Dorsolateral prefrontal cortex (tissue), 120 donors: ENCODE measurements at regions of chr9 and their contacts with region 1.

Region 1: DNA sequence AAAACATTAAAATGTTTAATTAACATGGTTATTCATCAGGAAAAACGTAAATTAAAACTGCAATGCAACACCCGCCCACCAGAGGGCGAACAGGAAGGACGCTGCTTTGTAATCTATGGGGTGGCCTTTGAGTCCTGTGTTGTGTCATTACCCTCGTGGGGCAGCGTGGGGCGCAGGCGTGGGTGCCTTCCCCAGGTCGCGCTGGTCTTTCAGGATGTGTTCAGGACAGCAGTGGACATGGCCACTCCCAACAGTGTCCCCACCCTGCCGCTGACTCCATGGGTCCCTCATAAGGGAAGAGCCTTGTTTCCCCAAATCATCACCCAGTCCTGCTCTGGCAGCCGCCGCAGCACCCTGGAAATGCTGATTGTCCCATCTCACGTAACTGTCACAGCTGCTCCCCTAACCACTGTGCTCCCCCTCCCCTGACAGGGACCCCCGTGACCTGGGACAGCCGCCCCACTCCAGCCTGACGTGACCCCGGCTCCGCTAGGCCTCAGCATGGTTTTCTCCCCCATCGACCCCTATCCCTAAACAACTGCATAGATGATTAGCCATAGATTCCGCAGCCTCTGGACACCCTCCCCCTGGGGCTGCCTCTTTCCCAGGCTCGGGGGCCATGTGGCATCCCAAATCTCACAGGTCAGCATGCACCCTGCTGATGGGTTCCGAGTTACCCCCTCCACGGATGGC is 36.4 kb downstream of the GLT6D1 start:
- DNase-seq: peak in 7 of 10 donors; percentile 18 to 43 (median 40)
- H3K4me3 ChIP-seq: no peak overlapping the region
- H3K27ac ChIP-seq: no peak overlapping the region
- H3K27me3 ChIP-seq: peaks cover 0 to 7% (median 0%) of the 10 kb centered on the region in 45 donors
- CTCF ChIP-seq: peak; percentile 56 to 85 (median 72)

Region 2: DNA sequence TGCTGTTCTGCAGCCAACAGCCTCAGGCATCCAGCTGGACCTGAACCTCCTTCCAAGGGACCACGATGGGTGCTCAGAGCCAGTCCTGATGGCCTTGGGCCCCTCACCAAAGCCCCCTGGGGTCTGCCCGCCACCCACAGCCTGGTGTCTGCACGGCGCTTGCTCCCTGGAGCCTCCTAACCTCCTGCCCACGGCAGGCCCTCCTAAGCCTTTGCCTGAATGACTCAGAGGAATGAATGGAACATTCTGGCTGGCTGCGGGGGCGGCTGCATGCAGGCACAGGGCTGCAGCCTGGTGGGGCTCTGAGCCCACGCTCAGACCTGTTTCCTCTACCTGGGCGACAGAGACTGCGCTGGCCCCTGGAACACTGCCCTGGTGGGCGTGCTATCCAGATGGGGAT is 89.5 kb after region 1 on chr9:
- intact Hi-C with region 1: loop called in 1 of 2 experiments (anchors 10 kb)
- DNase-seq: peak in 9 of 10 donors; percentile 41 to 88 (median 78)
- H3K4me3 ChIP-seq: no peak overlapping the region
- H3K27ac ChIP-seq: peak overlapping the region in 51 of 59 donors; percentile 28 to 95 (median 79)
- H3K27me3 ChIP-seq: peaks cover 0 to 2% (median 0%) of the 10 kb centered on the region in 45 donors
- CTCF ChIP-seq: no peak

Region 3: DNA sequence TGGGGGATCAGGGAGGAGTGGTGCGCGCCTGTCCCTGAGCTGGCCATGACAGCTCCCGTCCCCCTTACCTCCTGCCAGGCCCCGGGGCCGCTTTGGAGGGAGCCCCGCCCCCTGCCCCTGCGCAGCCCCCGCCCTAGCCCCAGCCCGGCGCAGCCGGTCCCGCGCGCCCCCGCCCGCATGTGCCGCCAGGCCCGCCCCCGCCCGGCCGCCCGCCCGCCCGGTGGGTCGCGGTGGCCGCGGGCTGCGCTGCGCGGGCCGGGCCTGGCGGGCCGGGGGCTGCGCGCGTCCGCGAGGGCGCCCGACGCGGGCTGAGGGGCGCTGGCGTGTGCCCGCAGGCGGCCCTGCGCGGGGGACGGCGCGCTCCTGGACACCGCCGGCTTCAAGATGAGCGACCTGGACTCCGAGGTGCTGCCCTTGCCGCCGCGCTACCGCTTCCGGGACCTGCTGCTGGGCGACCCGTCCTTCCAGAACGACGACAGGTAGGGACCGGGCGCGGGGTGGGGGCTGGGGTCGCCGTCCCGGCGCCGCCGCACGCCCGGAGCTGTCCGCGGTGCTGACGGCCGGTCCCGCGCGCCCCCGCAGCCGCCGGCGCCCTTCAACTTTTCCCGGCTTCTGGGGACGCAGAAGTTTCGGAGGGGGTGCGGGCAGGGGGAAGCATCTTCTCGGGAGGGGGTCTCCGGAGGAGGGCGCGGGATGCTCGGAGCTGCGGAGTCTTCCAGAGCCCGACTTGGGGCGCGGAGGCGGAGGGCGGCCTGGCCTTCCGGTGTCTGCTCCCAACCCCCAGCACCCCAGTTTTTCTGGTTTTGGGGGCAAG is 111.5 kb after region 1 on chr9:
- intact Hi-C with region 1: no loop called
- DNase-seq: no peak
- H3K4me3 ChIP-seq: peak overlapping the region in 57 of 59 donors; percentile 9 to 70 (median 51)
- H3K27ac ChIP-seq: peak overlapping the region in 51 of 59 donors; percentile 36 to 91 (median 77)
- H3K27me3 ChIP-seq: peaks cover 0 to 65% (median 29%) of the 10 kb centered on the region in 45 donors
- CTCF ChIP-seq: no peak

Region 4: GRCh38 chr9:136289651-136290507 is 686.9 kb after region 1 on chr9:
- intact Hi-C with region 1: loop called in 1 of 2 experiments (anchors 5 kb)
- DNase-seq: no peak
- H3K4me3 ChIP-seq: no peak overlapping the region
- H3K27ac ChIP-seq: no peak overlapping the region
- H3K27me3 ChIP-seq: peaks cover 0 to 2% (median 0%) of the 10 kb centered on the region in 45 donors
- CTCF ChIP-seq: no peak